ENCODE measurements at regions of chr3 and their contacts with region 1.

Region 1: DNA sequence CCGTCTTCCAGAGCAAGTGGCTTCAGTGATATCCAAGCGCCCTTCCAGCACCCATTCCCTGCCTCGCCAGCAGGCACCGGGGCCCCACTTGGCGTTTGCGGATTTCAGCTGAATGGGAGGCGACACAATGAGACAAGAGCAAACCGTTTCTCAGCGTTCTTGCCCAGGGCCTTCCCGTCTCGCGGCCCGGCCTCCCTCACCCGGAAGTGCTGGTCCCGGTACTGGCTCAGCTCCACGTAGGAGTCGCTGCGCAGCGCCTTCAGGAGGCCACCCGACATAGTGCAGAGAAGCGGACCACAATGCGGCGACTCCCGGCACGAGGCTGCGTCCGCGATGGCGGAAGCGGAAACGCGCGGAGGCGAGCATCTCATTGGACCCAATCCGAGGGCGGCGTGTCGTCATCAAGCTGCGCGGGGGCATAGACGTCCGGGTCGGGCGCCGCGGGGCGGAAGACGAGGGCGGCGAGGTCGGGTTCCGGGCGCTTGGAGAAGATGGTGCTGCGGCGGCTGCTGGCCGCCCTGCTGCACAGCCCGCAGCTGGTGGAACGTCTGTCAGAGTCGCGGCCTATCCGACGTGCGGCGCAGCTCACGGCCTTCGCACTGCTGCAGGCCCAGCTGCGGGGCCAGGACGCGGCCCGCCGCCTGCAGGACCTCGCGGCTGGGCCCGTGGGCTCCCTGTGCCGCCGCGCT is at the start of gene NCBP2:
- DNase-seq: peak; percentile 100
- H3K4me3 Mint-ChIP-seq: peak within 1 kb of the TSS; percentile 98
- H3K27ac Mint-ChIP-seq: peak within 1 kb of the TSS; percentile 92
- H3K4me1 Mint-ChIP-seq: peaks cover 38% of the 10 kb centered on the region
- H3K27me3 Mint-ChIP-seq: peaks cover 2% of the 10 kb centered on the region
- total RNA-seq, gene NCBP2: 83.0 to 85.1 TPM

Region 2: DNA sequence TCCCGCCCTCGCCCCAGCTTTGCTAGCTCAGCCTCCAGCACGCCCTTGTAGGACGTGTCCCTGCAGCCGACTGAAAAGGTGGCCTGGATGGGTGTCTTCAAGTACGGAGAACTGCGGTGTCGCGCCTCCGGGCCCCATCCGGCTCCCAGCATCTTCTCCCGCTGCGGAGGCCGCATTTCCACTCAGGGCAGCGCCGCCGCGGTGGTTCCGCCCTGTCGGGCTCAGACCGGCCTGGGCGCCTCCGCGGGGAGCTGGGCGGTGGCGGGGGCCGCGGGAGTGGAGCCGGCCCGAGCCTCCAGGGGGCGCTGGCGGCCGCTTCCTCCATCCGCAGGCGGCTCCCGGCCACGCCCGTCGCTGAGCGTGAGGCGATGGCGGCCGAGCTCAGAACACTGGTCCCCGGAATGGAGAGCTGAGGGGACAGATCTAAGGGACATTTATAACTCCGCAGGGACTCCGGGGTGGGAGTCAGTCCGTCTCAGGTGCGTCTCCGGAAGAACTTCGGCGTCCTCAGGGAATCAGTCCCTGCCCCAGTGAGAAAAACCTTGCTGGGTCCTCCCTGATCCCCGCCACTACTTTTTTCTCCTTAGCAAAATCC is 413.6 kb before region 1 on chr3:
- CTCF ChIA-PET with region 1: interaction called, 3 read pairs
- POLR2A ChIA-PET with region 1: no interaction called
- intact Hi-C with region 1: loop called (anchors 10 kb)
- DNase-seq: peak; percentile 92
- H3K4me3 Mint-ChIP-seq: peak overlapping the region; percentile 71
- H3K27ac Mint-ChIP-seq: peak overlapping the region; percentile 87
- H3K4me1 Mint-ChIP-seq: peaks cover 13% of the 10 kb centered on the region
- H3K27me3 Mint-ChIP-seq: peaks cover 2% of the 10 kb centered on the region

Region 3: GRCh38 chr3:196739671-196740480 is 202.5 kb before region 1 on chr3 and contains the start of gene PAK2:
- CTCF ChIA-PET with region 1: interaction called, 3 read pairs
- POLR2A ChIA-PET with region 1: interaction called, 10 read pairs
- intact Hi-C with region 1: loop called (anchors 2 kb)
- DNase-seq: peak; percentile 92
- H3K4me3 Mint-ChIP-seq: peak within 1 kb of the TSS; percentile 98
- H3K27ac Mint-ChIP-seq: peak within 1 kb of the TSS; percentile 96
- H3K4me1 Mint-ChIP-seq: peaks cover 28% of the 10 kb centered on the region
- H3K27me3 Mint-ChIP-seq: no peaks in the 10 kb centered on the region
- total RNA-seq, gene PAK2: 98.4 to 101 TPM

Region 4: GRCh38 chr3:196867507-196868296 is 74.7 kb before region 1 on chr3 and contains the start of gene SENP5:
- CTCF ChIA-PET with region 1: interaction called, 22 read pairs
- POLR2A ChIA-PET with region 1: interaction called, 36 read pairs
- intact Hi-C with region 1: loop called (anchors 1 kb)
- DNase-seq: peak; percentile 94
- H3K4me3 Mint-ChIP-seq: peak within 1 kb of the TSS; percentile 84
- H3K27ac Mint-ChIP-seq: peak within 1 kb of the TSS; percentile 85
- H3K4me1 Mint-ChIP-seq: peaks cover 29% of the 10 kb centered on the region
- H3K27me3 Mint-ChIP-seq: no peaks in the 10 kb centered on the region
- total RNA-seq, gene SENP5: 30.5 to 32.0 TPM

Region 5: DNA sequence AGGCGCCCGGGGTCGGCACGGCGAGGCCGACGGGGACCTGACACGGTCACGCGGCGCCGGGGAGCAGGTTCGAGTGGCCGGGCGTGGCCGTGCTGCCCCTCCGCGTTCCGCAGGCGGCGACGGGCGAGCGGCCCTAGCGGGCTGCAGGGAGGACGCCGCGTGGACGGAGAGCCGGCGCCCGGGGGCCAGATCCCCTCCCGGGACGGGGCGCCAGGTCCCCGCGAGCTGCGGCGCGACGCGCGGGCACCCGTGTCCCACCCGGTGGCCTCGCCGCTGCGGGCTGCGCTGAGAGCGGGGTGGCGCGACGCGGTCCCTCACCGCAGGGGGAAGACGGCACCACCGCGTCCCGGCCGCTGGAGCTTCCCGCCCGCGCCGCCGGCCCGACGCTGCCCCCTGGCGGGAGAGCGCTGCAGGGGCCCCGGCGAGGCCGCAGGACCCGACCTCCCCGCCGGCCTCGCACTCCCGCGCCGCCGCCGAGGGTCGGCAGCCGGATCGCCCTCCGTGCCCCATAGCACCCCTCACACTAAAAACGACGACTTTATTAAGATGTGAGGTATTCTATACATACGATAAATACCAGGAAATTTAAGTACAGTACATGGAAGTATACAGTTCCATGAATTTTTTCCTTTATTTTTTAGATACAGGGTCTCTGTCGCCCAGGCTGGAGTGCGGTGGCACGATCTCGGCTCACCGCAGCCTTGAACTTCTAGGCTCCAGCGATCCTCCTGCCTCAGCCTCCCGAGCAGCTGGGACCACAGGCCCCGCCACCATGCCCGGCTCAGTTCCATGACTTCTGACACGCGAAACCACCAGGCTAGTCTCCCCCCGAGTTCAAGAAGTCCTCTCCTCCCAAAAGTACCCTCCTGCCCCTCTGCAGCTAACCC is 27.5 kb after region 1 on chr3:
- CTCF ChIA-PET with region 1: interaction called, 8 read pairs
- POLR2A ChIA-PET with region 1: interaction called, 8 read pairs
- intact Hi-C with region 1: loop called (anchors 2 kb)
- DNase-seq: peak; percentile 78
- H3K4me3 Mint-ChIP-seq: peak overlapping the region; percentile 58
- H3K27ac Mint-ChIP-seq: no peak overlapping the region
- H3K4me1 Mint-ChIP-seq: peaks cover 12% of the 10 kb centered on the region
- H3K27me3 Mint-ChIP-seq: peaks cover 12% of the 10 kb centered on the region